Activated T-helper 1 cell treated with anti-CD3 and anti-CD28 coated beads, Interleukin-12 subunit alpha, Interleukin-12 subunit beta, Interleukin-2, Interleukin-4 antibody, amounts not matched to agents 30 ng/mL and 10 ng/mL and 1 ng/mL, durations not matched to agents 14 hours and 24 hours and 36 hours (primary cell): ENCODE measurements at regions of chr2 and their contacts with region 1.

Region 1: GRCh38 chr2:156476850-156477206 is 40.6 kb downstream of the GPD2 start:
- DNase-seq: peak; percentile 11
- H3K4me3 Mint-ChIP-seq: peak overlapping the region; percentile 76
- H3K27ac Mint-ChIP-seq: peak overlapping the region; percentile 92
- H3K4me1 Mint-ChIP-seq: peaks cover 69% of the 10 kb centered on the region
- H3K27me3 Mint-ChIP-seq: no peaks in the 10 kb centered on the region

Region 2: GRCh38 chr2:156385242-156385641 is 91.6 kb before region 1 on chr2:
- intact Hi-C with region 1: loop called (anchors 2 kb)
- DNase-seq: no peak
- H3K4me3 Mint-ChIP-seq: no peak overlapping the region
- H3K27ac Mint-ChIP-seq: peak overlapping the region; percentile 75
- H3K4me1 Mint-ChIP-seq: peaks cover 37% of the 10 kb centered on the region
- H3K27me3 Mint-ChIP-seq: peaks cover 4% of the 10 kb centered on the region

Region 3: GRCh38 chr2:156464106-156464505 is 12.7 kb before region 1 on chr2:
- intact Hi-C with region 1: no loop called
- DNase-seq: no peak
- H3K4me3 Mint-ChIP-seq: no peak overlapping the region
- H3K27ac Mint-ChIP-seq: no peak overlapping the region
- H3K4me1 Mint-ChIP-seq: peaks cover 18% of the 10 kb centered on the region
- H3K27me3 Mint-ChIP-seq: no peaks in the 10 kb centered on the region